HEK293 (cell line): ENCODE measurements at regions of chr20 and their contacts with region 1.

Region 1: GRCh38 chr20:17536944-17537444 is 5.8 kb upstream of the BFSP1 start:
- H3K4me3 ChIP-seq: no peak overlapping the region
- H3K27ac ChIP-seq: no peak overlapping the region
- H3K4me1 ChIP-seq: peaks cover 6% of the 10 kb centered on the region
- CTCF ChIP-seq: peak; percentile 92

Region 2: GRCh38 chr20:17617551-17618223 is 80.7 kb after region 1 on chr20:
- CTCF ChIA-PET with region 1: interaction called, 18 read pairs
- POLR2A ChIA-PET with region 1: no interaction called
- H3K4me3 ChIP-seq: no peak overlapping the region
- H3K27ac ChIP-seq: no peak overlapping the region
- H3K4me1 ChIP-seq: no peaks in the 10 kb centered on the region
- CTCF ChIP-seq: peak; percentile 54

Region 3: DNA sequence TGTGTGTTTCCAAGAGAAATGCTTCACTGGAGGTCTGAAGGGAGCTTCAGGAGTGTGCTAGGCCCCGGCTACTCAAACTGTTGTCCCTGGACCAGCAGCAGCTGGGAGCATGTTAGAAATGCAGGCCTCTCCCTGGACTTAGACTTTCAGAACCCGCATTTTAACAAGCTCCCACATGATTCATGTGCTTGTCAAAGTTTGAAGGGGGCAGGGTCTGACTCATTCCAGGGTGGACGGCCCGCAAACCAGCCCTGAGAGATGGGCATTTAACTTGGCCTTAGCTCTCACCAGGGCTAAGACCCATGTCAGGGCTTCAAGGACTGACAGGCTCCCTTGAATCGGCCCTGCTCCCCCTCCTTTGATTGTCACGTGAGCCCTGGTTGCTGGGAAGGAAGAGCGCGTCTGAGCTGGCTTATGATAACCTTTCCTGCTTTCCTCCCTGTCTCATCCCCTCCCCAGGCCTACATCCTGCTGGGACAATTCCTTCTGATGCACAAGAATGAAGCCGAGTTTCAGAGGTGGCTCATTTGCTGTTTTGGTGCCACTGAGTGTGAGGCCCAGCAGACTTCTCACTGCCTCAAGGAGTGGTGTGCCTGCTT is 198.3 kb after region 1 on chr20:
- CTCF ChIA-PET with region 1: no interaction called
- POLR2A ChIA-PET with region 1: no interaction called
- H3K4me3 ChIP-seq: no peak overlapping the region
- H3K27ac ChIP-seq: no peak overlapping the region
- H3K4me1 ChIP-seq: no peaks in the 10 kb centered on the region
- CTCF ChIP-seq: no peak